Naive thymus-derived CD4-positive, alpha-beta T cell (primary cell): ENCODE measurements at regions of chr17 and their contacts with region 1.

Region 1: GRCh38 chr17:1488030-1488863 is 4.2 kb downstream of the MYO1C start:
- DNase-seq: peak; percentile 40 to 83 (median 61)
- ATAC-seq: peak; percentile 61
- H3K4me3 ChIP-seq: peak overlapping the region; percentile 65
- H3K4me3 Mint-ChIP-seq: peak overlapping the region; percentile 82 to 95 (median 88)
- H3K27ac ChIP-seq: peak overlapping the region; percentile 78
- H3K27ac Mint-ChIP-seq: peak overlapping the region; percentile 49 to 92 (median 71)
- H3K4me1 ChIP-seq: peaks cover 21 to 47% of the 10 kb centered on the region in 2 donors
- H3K4me1 Mint-ChIP-seq: peaks cover 0 to 58% (median 44%) of the 10 kb centered on the region in 7 donors
- H3K27me3 ChIP-seq: no peaks in the 10 kb centered on the region
- H3K27me3 Mint-ChIP-seq: peaks cover 0 to 4% (median 0%) of the 10 kb centered on the region in 5 donors

Region 2: DNA sequence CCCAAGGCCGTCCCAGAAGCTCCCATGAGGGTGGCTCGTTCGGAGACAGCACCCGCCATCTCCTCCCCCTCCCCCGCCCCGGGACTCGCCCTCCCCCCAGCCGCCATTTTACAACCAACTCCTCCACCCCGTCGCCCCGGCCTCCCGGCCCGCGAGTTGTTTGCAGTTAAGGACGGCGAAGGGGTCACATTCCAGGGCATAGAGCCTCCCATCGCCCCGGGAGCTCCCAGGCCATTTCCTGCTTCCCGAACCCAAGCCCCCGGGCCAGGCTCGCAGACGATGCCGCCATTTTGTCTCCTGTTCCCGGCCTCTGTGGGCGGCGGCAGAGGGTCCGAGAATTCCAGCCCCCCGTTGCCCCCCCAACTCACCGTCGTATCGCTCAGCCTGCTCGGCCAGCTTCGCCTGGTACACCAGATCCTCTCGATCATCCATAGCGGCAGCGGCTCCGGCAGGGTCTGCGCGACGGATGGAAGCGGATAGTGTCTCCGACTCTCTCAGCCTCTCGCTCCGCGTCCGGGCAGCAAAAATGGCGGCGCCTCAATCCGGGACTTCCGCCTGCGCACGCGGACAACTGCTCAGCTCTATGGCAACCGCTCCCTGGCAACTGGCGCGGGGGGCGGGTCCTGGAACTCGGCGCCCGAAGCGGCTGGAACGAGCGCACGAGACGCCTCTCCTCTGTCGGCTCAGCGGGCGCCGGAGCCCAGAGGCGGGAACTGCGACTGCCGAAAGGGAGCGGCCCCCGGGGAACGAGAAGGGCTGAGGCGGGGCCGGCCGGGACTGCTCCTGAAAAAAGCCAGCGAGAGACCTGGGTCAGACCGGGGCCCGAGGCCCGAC is 88.4 kb before region 1 on chr17 and contains the start of gene YWHAE:
- CTCF ChIA-PET with region 1: no interaction called
- POLR2A ChIA-PET with region 1: interaction called, 5 read pairs
- intact Hi-C with region 1: loop called (anchors 1 kb)
- DNase-seq: peak; percentile 89 to 97 (median 94)
- ATAC-seq: peak; percentile 93
- H3K4me3 ChIP-seq: peak within 1 kb of the TSS; percentile 100
- H3K4me3 Mint-ChIP-seq: peak within 1 kb of the TSS; percentile 97 to 100 (median 99)
- H3K27ac ChIP-seq: peak within 1 kb of the TSS; percentile 98
- H3K27ac Mint-ChIP-seq: peak within 1 kb of the TSS; percentile 97 to 100 (median 99)
- H3K4me1 ChIP-seq: peaks cover 23 to 24% of the 10 kb centered on the region in 2 donors
- H3K4me1 Mint-ChIP-seq: peaks cover 18 to 45% (median 38%) of the 10 kb centered on the region in 7 donors
- H3K27me3 ChIP-seq: no peaks in the 10 kb centered on the region
- H3K27me3 Mint-ChIP-seq: peaks cover 0 to 6% (median 0%) of the 10 kb centered on the region in 5 donors
- total RNA-seq, gene YWHAE: 119 to 317 (median 127) TPM

Region 3: DNA sequence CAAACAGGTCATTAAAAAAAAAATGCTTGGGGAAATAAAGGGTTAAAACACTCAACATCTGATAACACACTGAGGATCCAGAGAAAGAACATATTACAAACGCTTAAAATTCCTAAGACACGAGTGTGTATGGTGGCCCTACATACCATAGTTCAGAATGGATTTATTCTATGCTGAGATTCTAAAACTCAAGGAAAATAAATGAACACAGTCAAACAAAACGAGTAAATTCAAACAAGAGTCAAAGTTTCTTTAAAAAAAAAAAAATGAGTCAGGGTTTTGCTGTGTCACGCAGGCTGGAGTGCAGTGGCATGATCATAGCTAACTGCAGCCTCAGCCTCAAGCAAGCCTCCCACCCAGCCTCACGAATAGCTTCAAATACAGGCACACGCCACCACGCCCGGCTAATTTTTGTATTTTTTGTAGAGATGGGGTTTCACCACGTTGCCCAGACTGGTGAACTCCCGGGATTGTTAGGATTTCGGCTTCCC is 49.6 kb before region 1 on chr17:
- CTCF ChIA-PET with region 1: no interaction called
- POLR2A ChIA-PET with region 1: no interaction called
- intact Hi-C with region 1: no loop called
- DNase-seq: no peak
- ATAC-seq: no peak
- H3K4me3 ChIP-seq: no peak overlapping the region
- H3K4me3 Mint-ChIP-seq: no peak overlapping the region
- H3K27ac ChIP-seq: no peak overlapping the region
- H3K27ac Mint-ChIP-seq: peak overlapping the region in 3 of 9 donors; percentile 8 to 77 (median 28)
- H3K4me1 ChIP-seq: no peaks in the 10 kb centered on the region
- H3K4me1 Mint-ChIP-seq: peaks cover 10 to 35% (median 28%) of the 10 kb centered on the region in 7 donors
- H3K27me3 ChIP-seq: no peaks in the 10 kb centered on the region
- H3K27me3 Mint-ChIP-seq: no peaks in the 10 kb centered on the region

Region 4: DNA sequence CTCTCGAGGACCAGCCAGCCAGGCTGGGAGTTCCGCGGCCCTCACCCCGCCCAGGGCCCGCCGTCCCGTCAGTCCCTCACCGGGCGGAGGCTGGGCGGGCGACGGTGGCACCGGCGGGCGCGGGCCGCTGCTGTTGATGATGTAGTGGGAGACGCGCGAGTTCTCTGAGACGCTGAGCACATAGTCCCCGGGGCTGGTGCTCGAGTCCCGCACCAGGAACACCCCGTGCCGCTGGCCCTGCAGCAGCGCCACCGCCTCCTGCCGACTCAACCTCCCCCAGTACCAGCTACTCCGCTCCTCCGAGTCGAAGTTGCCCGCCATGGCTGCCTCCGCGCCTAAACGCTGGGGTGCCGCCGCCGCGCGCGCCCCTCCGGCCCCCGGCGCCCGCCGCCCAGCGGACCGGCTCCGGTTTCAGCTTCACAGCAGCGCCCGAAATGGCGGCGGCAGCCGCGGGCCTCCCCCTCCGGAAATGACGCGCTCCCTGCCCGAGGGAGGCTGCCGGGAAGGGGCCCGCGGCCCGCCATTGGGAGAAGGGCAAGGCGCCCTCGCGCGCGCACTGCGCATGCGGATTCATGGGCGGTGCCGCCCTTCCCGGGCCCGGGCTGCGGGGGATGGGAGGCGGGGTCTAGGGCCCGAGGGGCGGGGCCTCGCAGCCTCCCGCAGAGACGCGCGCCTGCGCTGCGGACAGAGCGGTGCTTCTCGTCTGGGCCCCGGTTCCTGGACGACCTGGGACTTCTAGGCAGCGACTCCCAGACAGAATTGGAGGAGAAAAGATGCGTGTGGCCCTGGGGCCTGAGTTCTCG is 32.2 kb before region 1 on chr17 and contains the start of gene CRK:
- CTCF ChIA-PET with region 1: interaction called, 3 read pairs
- POLR2A ChIA-PET with region 1: interaction called, 5 read pairs
- intact Hi-C with region 1: loop called (anchors 1 kb)
- DNase-seq: peak; percentile 97 to 100 (median 99)
- ATAC-seq: peak; percentile 97
- H3K4me3 ChIP-seq: peak within 1 kb of the TSS; percentile 94
- H3K4me3 Mint-ChIP-seq: peak within 1 kb of the TSS; percentile 86 to 95 (median 90)
- H3K27ac ChIP-seq: peak within 1 kb of the TSS; percentile 97
- H3K27ac Mint-ChIP-seq: peak within 1 kb of the TSS; percentile 63 to 92 (median 86)
- H3K4me1 ChIP-seq: peaks cover 18 to 37% of the 10 kb centered on the region in 2 donors
- H3K4me1 Mint-ChIP-seq: peaks cover 28 to 64% (median 48%) of the 10 kb centered on the region in 7 donors
- H3K27me3 ChIP-seq: no peaks in the 10 kb centered on the region
- H3K27me3 Mint-ChIP-seq: peaks cover 0 to 23% (median 4%) of the 10 kb centered on the region in 5 donors
- total RNA-seq, gene CRK: 16.9 to 29.0 (median 20.9) TPM

Region 5: DNA sequence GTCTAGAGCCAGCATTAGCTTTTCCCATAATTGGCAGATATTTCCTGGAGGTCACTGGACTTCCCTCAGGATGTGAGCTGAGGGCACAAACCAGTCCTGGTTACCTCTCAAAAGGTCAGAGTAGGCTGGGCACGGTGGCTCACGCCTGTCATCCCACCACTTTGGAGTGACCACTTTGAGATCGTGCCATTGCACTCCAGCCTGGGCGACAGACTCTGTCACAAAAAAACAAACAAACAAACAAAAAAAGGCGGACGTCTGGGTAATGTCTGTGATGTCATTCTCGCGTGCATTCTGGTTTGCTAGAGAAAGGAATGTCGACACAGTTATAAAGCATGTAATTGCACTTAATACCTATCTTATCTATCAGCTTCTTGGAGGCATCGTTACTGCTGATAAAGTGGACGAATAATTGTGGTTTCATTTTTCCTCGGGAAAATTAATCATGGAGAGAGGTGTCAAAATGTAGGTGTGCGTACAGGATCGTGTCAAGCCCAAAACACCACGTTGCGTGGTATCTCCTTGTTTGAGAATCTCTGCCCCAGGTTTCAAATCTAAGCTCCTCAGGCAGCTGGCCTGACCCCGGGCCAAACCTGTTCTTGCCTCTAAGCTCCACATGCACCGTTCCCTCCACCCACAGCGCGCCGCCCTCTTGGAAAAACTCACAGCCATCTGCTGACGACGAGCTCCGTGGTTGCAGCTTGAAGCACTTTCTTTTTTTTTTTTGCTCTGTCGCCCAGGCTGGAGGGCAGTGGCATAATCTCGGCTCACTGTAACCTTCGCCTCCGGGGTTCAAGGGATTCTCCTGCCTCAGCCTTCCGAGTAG is 25.7 kb before region 1 on chr17:
- CTCF ChIA-PET with region 1: no interaction called
- POLR2A ChIA-PET with region 1: interaction called, 7 read pairs
- intact Hi-C with region 1: loop called in 1 of 2 experiments (anchors 1 kb)
- DNase-seq: no peak
- ATAC-seq: no peak
- H3K4me3 ChIP-seq: no peak overlapping the region
- H3K4me3 Mint-ChIP-seq: peak overlapping the region; percentile 61 to 86 (median 81)
- H3K27ac ChIP-seq: no peak overlapping the region
- H3K27ac Mint-ChIP-seq: peak overlapping the region; percentile 64 to 92 (median 85)
- H3K4me1 ChIP-seq: peaks cover 16 to 37% of the 10 kb centered on the region in 2 donors
- H3K4me1 Mint-ChIP-seq: peaks cover 25 to 51% (median 37%) of the 10 kb centered on the region in 7 donors
- H3K27me3 ChIP-seq: no peaks in the 10 kb centered on the region
- H3K27me3 Mint-ChIP-seq: peaks cover 0 to 36% (median 4%) of the 10 kb centered on the region in 5 donors

Region 6: GRCh38 chr17:1474402-1475189 is 13.7 kb before region 1 on chr17:
- CTCF ChIA-PET with region 1: interaction called, 3 read pairs
- POLR2A ChIA-PET with region 1: no interaction called
- intact Hi-C with region 1: loop called in 1 of 2 experiments (anchors 2 kb)
- DNase-seq: no peak
- ATAC-seq: no peak
- H3K4me3 ChIP-seq: no peak overlapping the region
- H3K4me3 Mint-ChIP-seq: no peak overlapping the region
- H3K27ac ChIP-seq: no peak overlapping the region
- H3K27ac Mint-ChIP-seq: no peak overlapping the region
- H3K4me1 ChIP-seq: peaks cover 0 to 7% of the 10 kb centered on the region in 2 donors
- H3K4me1 Mint-ChIP-seq: peaks cover 15 to 19% (median 18%) of the 10 kb centered on the region in 7 donors
- H3K27me3 ChIP-seq: no peaks in the 10 kb centered on the region
- H3K27me3 Mint-ChIP-seq: no peaks in the 10 kb centered on the region

Region 7: GRCh38 chr17:1561400-1562175 is 73.3 kb after region 1 on chr17:
- CTCF ChIA-PET with region 1: no interaction called
- POLR2A ChIA-PET with region 1: no interaction called
- intact Hi-C with region 1: loop called in 1 of 2 experiments (anchors 2 kb)
- DNase-seq: peak in 8 of 9 donors; percentile 28 to 58 (median 36)
- ATAC-seq: peak; percentile 37
- H3K4me3 ChIP-seq: peak overlapping the region; percentile 39
- H3K4me3 Mint-ChIP-seq: peak overlapping the region; percentile 73 to 89 (median 82)
- H3K27ac ChIP-seq: peak overlapping the region; percentile 76
- H3K27ac Mint-ChIP-seq: peak overlapping the region in 8 of 9 donors; percentile 54 to 90 (median 76)
- H3K4me1 ChIP-seq: peaks cover 9 to 12% of the 10 kb centered on the region in 2 donors
- H3K4me1 Mint-ChIP-seq: peaks cover 25 to 54% (median 43%) of the 10 kb centered on the region in 7 donors
- H3K27me3 ChIP-seq: no peaks in the 10 kb centered on the region
- H3K27me3 Mint-ChIP-seq: peaks cover 0 to 13% (median 0%) of the 10 kb centered on the region in 5 donors

Region 8: GRCh38 chr17:1648963-1649843 is 161.0 kb after region 1 on chr17:
- CTCF ChIA-PET with region 1: no interaction called
- POLR2A ChIA-PET with region 1: interaction called, 3 read pairs
- intact Hi-C with region 1: loop called in 1 of 2 experiments (anchors 10 kb)
- DNase-seq: peak; percentile 88 to 97 (median 93)
- ATAC-seq: peak; percentile 90
- H3K4me3 ChIP-seq: peak overlapping the region; percentile 64
- H3K4me3 Mint-ChIP-seq: peak overlapping the region; percentile 65 to 81 (median 74)
- H3K27ac ChIP-seq: peak overlapping the region; percentile 69
- H3K27ac Mint-ChIP-seq: peak overlapping the region in 5 of 9 donors; percentile 38 to 58 (median 55)
- H3K4me1 ChIP-seq: peaks cover 15 to 21% of the 10 kb centered on the region in 2 donors
- H3K4me1 Mint-ChIP-seq: peaks cover 0 to 38% (median 10%) of the 10 kb centered on the region in 7 donors
- H3K27me3 ChIP-seq: no peaks in the 10 kb centered on the region
- H3K27me3 Mint-ChIP-seq: no peaks in the 10 kb centered on the region